Endothelial cell of umbilical vein (primary cell): ENCODE measurements at regions of chr1 and their contacts with region 1.

Region 1: DNA sequence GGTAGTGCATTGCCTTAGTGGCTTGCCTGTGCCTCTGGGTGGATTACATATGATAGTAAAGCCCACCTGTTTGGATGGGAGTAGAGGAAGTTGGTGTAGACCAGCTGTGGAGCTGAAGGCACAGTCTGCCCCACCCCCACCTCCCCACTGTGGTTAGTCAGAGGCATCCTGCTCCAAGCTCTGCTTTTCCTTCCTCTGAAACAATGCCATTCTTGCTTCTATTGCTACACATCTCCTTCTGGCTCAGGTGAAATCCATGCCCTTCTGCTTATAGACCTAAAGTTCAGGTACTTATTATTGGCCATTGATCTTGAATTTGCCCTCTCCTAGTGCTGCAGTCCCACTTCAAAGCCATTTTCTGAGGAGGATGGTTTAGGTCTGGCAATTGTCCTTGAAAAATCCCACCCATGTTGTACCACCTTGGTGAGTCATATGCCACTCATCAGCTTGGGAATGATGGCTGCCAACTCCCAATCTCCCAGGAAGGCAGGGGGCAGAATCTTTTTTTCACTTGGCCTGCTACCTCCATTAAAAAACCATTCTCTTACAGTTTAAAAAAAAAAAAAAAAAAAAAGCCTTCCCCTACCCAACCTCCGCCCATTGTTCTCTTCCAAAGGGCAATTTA is 6.7 kb upstream of the TXLNA start:
- DNase-seq: peak; percentile 56
- H3K4me3 ChIP-seq: no peak overlapping the region
- H3K27ac ChIP-seq: peak overlapping the region; percentile 3
- H3K4me1 ChIP-seq: peaks cover 12% of the 10 kb centered on the region
- H3K27me3 ChIP-seq: no peaks in the 10 kb centered on the region
- CTCF ChIP-seq: no peak
- POLR2A ChIP-seq: no peak

Region 2: DNA sequence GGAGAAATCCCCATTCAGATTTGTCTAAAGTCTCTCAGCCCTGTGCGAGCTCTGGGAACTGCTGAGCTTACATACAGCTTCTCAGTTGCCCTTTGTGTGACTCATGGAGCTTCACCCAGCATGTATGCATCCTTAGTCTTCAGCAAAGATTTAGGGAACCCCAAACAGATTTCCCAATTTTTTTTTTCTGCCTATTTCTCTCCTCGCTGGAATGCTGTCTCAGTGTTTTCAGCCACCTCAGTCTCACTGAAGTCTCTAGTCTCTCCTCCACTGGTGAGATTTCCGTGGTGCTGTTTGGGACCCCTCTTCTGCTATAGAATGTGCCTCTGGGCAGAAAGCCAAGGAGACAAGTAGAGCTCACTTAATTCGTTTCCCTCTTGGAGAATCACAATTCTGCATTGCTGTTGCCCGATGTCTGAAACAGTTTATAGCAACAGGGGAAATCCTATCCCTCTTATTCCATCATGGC is 21.4 kb before region 1 on chr1:
- CTCF ChIA-PET with region 1: no interaction called
- POLR2A ChIA-PET with region 1: no interaction called
- dilution Hi-C with region 1: no loop called
- intact Hi-C with region 1: loop called (anchors 2 kb)
- DNase-seq: peak; percentile 16
- H3K4me3 ChIP-seq: no peak overlapping the region
- H3K27ac ChIP-seq: no peak overlapping the region
- H3K4me1 ChIP-seq: no peaks in the 10 kb centered on the region
- H3K27me3 ChIP-seq: no peaks in the 10 kb centered on the region
- CTCF ChIP-seq: no peak
- POLR2A ChIP-seq: no peak